IMR-90 (cell line): ENCODE measurements at regions of chr6 and their contacts with region 1.

Region 1: GRCh38 chr6:99241905-99242534 is 107.5 kb downstream of the FAXC start:
- DNase-seq: peak; percentile 40
- ATAC-seq: peak; percentile 53; the same call in 1 of the 2 replicates
- H3K4me3 ChIP-seq: no peak overlapping the region
- H3K27ac ChIP-seq: no peak overlapping the region
- H3K4me1 ChIP-seq: no peaks in the 10 kb centered on the region
- H3K27me3 ChIP-seq: no peaks in the 10 kb centered on the region
- CTCF ChIP-seq: peak; percentile 42
- POLR2A ChIP-seq: no peak
- RAD21 ChIP-seq: peak; percentile 46

Region 2: GRCh38 chr6:97497713-97498331 is 1744.2 kb before region 1 on chr6:
- CTCF ChIA-PET with region 1: no interaction called
- POLR2A ChIA-PET with region 1: no interaction called
- dilution Hi-C with region 1: no loop called
- in situ Hi-C with region 1: no loop called
- intact Hi-C with region 1: loop called (anchors 5 kb)
- DNase-seq: peak; percentile 65
- ATAC-seq: peak; percentile 98
- H3K4me3 ChIP-seq: no peak overlapping the region
- H3K27ac ChIP-seq: no peak overlapping the region
- H3K4me1 ChIP-seq: no peaks in the 10 kb centered on the region
- H3K27me3 ChIP-seq: 0 out of 2 replicates have a peak, but pooled peaks cover 2% of the 10 kb centered on the region
- CTCF ChIP-seq: peak; percentile 83
- POLR2A ChIP-seq: no peak
- RAD21 ChIP-seq: peak; percentile 71

Region 3: GRCh38 chr6:99151634-99152344 is 90.2 kb before region 1 on chr6:
- CTCF ChIA-PET with region 1: interaction called, 3 read pairs
- POLR2A ChIA-PET with region 1: no interaction called
- dilution Hi-C with region 1: no loop called
- in situ Hi-C with region 1: no loop called
- intact Hi-C with region 1: loop called (anchors 2 kb)
- DNase-seq: peak; percentile 28
- ATAC-seq: peak; percentile 74
- H3K4me3 ChIP-seq: no peak overlapping the region
- H3K27ac ChIP-seq: no peak overlapping the region
- H3K4me1 ChIP-seq: no peaks in the 10 kb centered on the region
- H3K27me3 ChIP-seq: 0 out of 2 replicates have a peak, but pooled peaks cover 1% of the 10 kb centered on the region
- CTCF ChIP-seq: peak; percentile 46
- POLR2A ChIP-seq: no peak
- RAD21 ChIP-seq: no peak; the same call in 1 of the 2 replicates